ENCODE measurements at regions of chr17 and their contacts with region 1.

Region 1: GRCh38 chr17:50909765-50910605 is 43.8 kb upstream of the TOB1 start:
- DNase-seq: peak in 7 of 9 donors; percentile 67 to 87 (median 81)
- ATAC-seq: peak; percentile 92
- H3K4me3 ChIP-seq: peak overlapping the region; percentile 46
- H3K4me3 Mint-ChIP-seq: peak overlapping the region; percentile 29 to 84 (median 66)
- H3K27ac ChIP-seq: peak overlapping the region; percentile 75
- H3K27ac Mint-ChIP-seq: peak overlapping the region; percentile 87 to 99 (median 98)
- H3K4me1 ChIP-seq: peaks cover 50 to 69% of the 10 kb centered on the region in 2 donors
- H3K4me1 Mint-ChIP-seq: peaks cover 41 to 78% (median 67%) of the 10 kb centered on the region in 7 donors
- H3K27me3 ChIP-seq: no peaks in the 10 kb centered on the region
- H3K27me3 Mint-ChIP-seq: peaks cover 0 to 2% (median 0%) of the 10 kb centered on the region in 5 donors

Region 2: DNA sequence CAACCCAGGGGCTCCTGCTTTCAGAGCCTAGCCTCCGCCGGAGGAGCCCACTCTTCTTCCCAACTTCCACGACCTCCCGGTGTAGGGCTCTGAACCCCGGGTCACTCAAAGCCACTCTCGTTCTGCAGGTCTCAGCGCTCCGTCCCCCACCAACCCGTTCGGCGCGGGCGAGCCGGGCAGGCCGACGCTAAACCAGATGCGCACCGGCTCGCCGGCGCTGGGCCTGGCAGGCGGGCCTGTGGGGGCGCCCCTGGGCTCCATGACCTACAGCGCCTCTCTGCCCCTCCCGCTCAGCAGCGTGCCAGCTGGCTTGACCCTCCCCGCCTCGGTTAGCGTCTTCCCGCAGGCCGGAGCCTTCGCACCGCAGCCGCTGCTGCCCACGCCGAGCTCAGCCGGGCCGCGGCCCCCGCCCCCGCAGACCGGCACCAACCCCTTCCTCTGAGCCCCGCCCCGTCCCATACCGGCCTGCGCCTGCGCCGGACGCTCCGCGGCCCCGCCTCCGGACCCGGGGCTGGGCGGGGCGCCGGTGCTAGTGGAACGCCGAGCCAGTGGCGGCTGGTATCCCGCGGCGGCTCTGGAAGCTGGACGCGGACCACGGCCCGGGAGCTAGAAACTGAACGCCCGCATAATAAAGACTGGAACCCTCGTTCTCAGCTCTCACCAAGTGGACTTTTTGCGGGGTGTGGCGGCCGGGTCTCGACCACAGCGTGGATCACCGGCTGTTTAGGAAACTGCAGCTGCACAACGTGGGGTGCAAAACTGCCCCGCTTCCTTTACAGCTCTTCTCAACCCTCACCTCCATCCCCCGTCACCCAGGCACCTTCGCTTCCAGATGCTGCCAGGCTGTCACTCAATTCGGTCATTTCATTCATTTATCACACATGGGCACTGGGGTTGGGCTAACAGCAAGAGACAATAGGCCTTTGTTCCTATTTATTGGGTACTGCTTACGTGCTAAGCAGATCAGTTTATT is 368.0 kb before region 1 on chr17:
- CTCF ChIA-PET with region 1: no interaction called
- POLR2A ChIA-PET with region 1: no interaction called
- intact Hi-C with region 1: no loop called
- DNase-seq: peak; percentile 68 to 96 (median 83)
- ATAC-seq: peak; percentile 90
- H3K4me3 ChIP-seq: peak overlapping the region; percentile 61
- H3K4me3 Mint-ChIP-seq: peak overlapping the region; percentile 83 to 88 (median 85)
- H3K27ac ChIP-seq: peak overlapping the region; percentile 61
- H3K27ac Mint-ChIP-seq: peak overlapping the region; percentile 24 to 90 (median 67)
- H3K4me1 ChIP-seq: peaks cover 10 to 16% of the 10 kb centered on the region in 2 donors
- H3K4me1 Mint-ChIP-seq: peaks cover 0 to 22% (median 22%) of the 10 kb centered on the region in 7 donors
- H3K27me3 ChIP-seq: no peaks in the 10 kb centered on the region
- H3K27me3 Mint-ChIP-seq: peaks cover 0 to 28% (median 7%) of the 10 kb centered on the region in 5 donors

Region 3: DNA sequence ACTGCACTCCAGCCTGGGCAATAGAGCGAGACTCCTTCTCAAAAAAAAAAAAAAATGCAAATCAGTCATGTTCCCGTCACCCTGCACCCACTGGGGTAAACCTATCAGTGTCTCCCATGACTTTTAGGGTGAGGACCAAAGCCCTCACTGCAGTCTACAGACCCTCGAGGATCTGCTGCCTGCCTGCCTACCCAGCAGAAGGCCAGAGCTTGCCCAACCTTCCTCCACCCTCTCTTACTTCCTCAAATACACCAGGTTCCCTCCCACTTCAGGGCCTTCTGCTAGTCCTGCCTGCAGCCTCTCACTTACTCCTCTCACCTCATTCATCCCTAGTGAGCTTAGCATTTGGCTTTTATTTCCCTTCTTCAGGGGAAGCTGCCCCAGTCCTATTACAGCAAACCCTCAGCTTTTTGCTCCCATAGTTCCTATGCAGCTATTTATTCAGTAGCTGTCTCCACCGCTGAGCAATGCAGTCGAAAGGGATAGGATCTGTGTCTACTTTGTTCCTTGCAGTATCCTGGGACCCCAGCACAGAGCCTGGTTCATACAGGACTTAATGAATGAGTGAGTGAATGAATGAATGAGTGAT is 26.0 kb before region 1 on chr17:
- CTCF ChIA-PET with region 1: interaction called, 5 read pairs
- POLR2A ChIA-PET with region 1: interaction called, 88 read pairs
- intact Hi-C with region 1: loop called in 1 of 2 experiments (anchors 2 kb)
- DNase-seq: no peak
- ATAC-seq: peak; percentile 79
- H3K4me3 ChIP-seq: no peak overlapping the region
- H3K4me3 Mint-ChIP-seq: no peak overlapping the region
- H3K27ac ChIP-seq: peak overlapping the region; percentile 10
- H3K27ac Mint-ChIP-seq: peak overlapping the region; percentile 7 to 92 (median 54)
- H3K4me1 ChIP-seq: peaks cover 0 to 16% of the 10 kb centered on the region in 2 donors
- H3K4me1 Mint-ChIP-seq: peaks cover 24 to 46% (median 36%) of the 10 kb centered on the region in 7 donors
- H3K27me3 ChIP-seq: no peaks in the 10 kb centered on the region
- H3K27me3 Mint-ChIP-seq: peaks cover 0 to 19% (median 0%) of the 10 kb centered on the region in 5 donors